ENCODE measurements at regions of chr3 and their contacts with region 1.

Region 1: DNA sequence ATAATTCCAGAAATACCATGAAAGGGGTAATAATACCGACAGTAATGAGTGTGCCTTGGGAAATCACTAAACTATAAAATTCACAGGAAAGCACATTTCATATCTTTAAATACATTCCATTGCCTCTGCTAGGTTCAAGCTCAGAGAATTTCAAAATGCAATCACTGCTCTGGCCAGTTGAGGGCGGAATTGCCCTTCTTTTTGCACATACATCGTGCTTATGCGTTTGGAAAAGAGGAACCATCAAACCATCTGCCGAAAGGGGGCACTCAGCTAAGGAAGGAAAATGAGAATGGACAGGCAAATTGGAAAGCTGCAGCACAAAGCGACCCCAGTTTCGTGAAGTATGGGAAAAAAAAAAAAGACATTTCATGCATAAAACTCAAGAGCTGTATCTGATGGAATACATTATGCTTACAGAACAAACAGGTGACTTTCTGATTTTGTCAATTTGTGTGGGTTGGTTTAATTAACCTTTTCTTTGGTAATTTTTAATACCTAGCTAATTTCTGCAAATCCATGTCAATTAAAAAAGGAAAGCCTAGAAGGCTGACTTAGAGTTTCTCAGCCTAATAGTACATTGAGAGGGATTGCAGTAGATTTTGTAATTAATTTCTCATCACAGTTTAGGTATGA is 61.4 kb downstream of the TUSC7 start:
- DNase-seq: peak in 1 of 2 donors; percentile 66
- ATAC-seq: peak; percentile 83
- H3K4me3 ChIP-seq: no peak overlapping the region
- H3K27ac ChIP-seq: no peak overlapping the region
- H3K4me1 ChIP-seq: no peaks in the 10 kb centered on the region
- H3K27me3 ChIP-seq: no peaks in the 10 kb centered on the region

Region 2: DNA sequence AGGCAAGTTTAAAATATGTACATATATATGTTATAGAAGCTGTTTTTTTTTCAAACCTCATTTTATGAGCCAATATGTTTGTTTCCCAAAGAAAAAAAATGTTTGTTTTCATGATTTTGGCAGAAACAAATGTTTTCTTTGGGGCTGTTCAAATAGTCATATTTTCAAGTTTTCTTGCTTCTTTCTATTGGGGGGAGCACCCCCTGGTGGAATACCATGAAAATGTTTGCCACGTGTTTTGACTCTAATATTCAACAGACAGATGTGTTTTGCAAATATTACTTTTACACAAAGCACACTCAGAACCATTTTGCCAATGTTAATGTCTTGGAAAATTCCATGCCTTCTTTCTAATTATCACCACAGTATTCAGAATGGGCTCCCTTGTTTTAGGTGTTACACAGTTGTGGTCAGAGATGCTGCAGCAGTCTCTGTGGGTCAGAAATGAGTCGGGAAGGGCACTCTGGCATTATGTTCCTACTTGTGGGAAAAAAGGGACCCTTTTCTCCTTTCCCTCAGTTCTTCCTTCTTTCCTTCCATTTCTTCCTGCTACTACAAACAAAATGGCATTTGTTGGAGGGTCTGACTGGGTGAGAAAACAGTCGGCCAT is 755.6 kb after region 1 on chr3:
- intact Hi-C with region 1: loop called (anchors 10 kb)
- DNase-seq: peak in 1 of 2 donors; percentile 44
- ATAC-seq: no peak
- H3K4me3 ChIP-seq: no peak overlapping the region
- H3K27ac ChIP-seq: no peak overlapping the region
- H3K4me1 ChIP-seq: no peaks in the 10 kb centered on the region
- H3K27me3 ChIP-seq: peaks cover 0 to 1% of the 10 kb centered on the region in 2 donors

Region 3: DNA sequence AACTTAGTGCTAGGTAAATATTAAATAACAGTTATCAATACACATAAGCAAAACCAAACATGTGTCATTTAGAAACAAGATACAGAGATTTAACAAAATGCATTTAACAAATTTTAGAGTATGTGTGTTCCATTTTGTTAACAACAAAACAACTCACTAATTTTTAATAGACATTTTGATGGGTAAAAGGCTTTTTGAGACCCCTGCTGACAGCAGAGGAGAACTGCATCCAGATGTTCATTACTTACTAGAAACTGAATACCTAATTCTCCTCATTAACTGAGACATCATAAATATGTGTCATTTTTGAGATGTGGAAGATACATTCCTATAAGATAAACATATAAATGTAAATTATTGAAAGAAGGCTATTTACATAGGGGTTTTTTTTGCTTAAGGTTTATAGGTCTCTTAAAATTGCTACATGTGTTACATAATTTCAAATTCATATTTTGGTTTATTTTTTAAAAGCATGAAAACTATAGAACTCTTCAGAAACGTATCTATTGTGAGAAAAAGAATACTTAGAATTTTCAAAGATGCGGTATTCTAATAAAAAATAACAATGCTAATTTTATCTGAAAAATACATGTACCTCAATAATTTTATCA is 948.5 kb after region 1 on chr3:
- intact Hi-C with region 1: loop called (anchors 2 to 10 kb)
- DNase-seq: no peak
- ATAC-seq: no peak
- H3K4me3 ChIP-seq: no peak overlapping the region
- H3K27ac ChIP-seq: no peak overlapping the region
- H3K4me1 ChIP-seq: no peaks in the 10 kb centered on the region
- H3K27me3 ChIP-seq: no peaks in the 10 kb centered on the region

Region 4: GRCh38 chr3:118000219-118000618 is 1229.3 kb after region 1 on chr3:
- intact Hi-C with region 1: loop called in 1 of 2 experiments (anchors 10 kb)
- DNase-seq: no peak
- ATAC-seq: no peak
- H3K4me3 ChIP-seq: no peak overlapping the region
- H3K27ac ChIP-seq: no peak overlapping the region
- H3K4me1 ChIP-seq: no peaks in the 10 kb centered on the region
- H3K27me3 ChIP-seq: no peaks in the 10 kb centered on the region